Lower leg skin (tissue), 4 donors: ENCODE measurements at regions of chr17 and their contacts with region 1.

Region 1: DNA sequence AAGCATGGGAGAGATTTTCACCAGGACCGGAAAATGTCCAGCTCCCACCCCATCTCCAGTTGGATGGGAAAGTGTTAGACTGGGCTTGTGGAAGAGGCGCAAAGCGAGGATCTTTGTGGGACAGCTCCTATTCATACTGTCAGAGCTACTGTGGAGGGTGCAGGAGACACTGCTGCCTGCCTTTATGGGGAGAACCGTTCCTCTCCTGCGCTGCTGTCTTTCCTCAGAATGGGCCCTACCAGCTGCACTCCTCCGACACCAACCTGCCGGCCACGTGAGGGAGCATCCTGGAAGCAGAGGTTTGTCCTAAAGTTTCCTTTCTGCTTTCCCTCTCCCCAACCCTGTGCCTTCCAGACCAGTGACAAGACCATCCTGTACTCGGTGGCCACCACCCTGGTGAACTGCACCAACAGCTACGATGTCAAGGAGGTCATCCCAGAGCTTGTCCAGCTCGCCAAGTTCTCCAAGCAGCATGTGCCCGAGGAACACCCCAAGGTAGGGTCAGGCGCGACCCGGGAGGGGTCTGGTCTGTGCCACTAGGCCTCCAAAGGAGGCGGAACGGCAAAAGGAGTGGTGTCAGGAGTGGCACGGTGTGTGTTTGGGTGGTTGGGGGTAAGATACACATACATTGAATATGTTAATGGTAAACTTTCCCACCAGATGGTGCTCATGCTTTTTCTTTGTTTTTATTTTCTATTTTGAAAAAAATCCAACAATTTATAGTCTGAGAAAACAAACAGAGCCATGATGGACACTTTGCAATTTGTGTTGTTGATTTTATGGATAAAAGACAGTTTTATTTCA is 23.0 kb downstream of the SLC35G3 start:
- DNase-seq: peak in 1 of 2 donors; percentile 83
- H3K4me3 ChIP-seq: no peak overlapping the region
- CTCF ChIP-seq: no peak
- POLR2A ChIP-seq: no peak

Region 2: GRCh38 chr17:35537601-35538141 is 366.5 kb after region 1 on chr17 and contains the start of gene SLFN12L:
- intact Hi-C with region 1: loop called (anchors 10 kb)
- DNase-seq: no peak
- H3K4me3 ChIP-seq: no peak within 1 kb of the TSS
- CTCF ChIP-seq: no peak
- POLR2A ChIP-seq: no peak
- total RNA-seq, gene SLFN12L: 0.12 to 0.80 (median 0.46) TPM

Region 3: DNA sequence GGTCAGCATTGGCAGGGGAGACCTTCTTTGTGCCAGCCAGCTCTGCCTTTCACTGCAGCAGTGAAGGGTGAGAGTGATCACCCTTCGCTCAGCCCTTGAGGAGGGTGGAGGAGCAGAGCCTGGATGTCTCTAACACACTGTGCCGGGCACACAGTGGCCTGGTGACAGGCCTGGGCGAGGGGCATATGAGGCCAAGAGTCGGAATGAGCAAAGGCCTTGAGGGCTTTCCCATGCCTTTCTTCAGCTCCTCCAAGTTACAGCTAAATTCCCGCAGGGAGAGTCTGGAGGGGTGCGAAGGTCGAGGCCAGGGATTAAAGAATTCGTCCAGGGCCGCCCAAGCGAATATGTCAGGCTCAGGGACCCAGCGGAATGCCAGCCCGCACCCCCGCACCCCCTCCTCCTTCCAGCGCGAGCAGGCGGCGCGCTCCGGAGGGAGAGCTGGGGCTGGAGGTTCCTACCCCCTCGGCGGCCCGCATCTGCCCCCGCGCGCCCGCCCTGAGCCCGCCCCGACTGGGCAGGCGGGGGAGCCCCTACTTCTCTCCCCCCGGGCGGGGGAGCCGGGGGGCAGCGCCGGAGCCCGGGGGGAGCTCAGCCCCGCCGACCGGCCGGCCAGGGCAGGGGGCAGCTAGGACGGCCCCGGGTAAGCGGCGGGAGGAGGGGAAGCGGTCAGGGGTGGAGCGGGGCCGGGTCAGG is 560.2 kb after region 1 on chr17 and contains the start of gene RASL10B:
- intact Hi-C with region 1: no loop called
- DNase-seq: peak in 1 of 2 donors; percentile 89
- H3K4me3 ChIP-seq: peak within 1 kb of the TSS; percentile 40
- CTCF ChIP-seq: no peak
- POLR2A ChIP-seq: no peak
- total RNA-seq, gene RASL10B: 0.66 to 2.4 (median 1.5) TPM